ENCODE measurements at regions of chr3 and their contacts with region 1.

Region 1: DNA sequence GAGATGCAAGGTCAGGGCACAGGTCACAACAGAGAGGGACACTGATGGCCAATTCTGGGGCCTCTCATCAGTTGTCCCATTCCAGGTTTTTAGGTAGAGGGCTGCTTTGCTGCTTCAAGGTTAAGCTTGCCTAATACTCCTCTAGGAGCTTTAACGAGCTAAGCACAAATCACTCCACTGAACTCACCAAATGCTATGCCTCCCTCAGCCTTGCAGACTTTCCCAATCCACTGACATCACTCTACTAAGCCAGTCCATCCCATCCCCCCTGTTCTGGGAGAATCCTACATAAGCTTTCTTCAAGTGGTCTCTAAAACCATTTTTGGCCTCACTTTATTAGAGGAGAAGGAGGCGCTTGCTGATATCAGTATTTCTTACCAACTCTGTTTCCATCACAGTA is 24.8 kb upstream of the PDCD6IP start:
- DNase-seq: no peak
- ATAC-seq: 0 out of 6 replicates have a peak, but pooled peaks of 1 of the 2 experiments have one; percentile 43
- H3K4me3 ChIP-seq: no peak overlapping the region
- H3K27ac ChIP-seq: no peak overlapping the region
- H3K4me1 ChIP-seq: no peaks in the 10 kb centered on the region
- CTCF ChIP-seq: no peak
- EP300 ChIP-seq: no peak
- POLR2A ChIP-seq: no peak
- RAD21 ChIP-seq: no peak

Region 2: DNA sequence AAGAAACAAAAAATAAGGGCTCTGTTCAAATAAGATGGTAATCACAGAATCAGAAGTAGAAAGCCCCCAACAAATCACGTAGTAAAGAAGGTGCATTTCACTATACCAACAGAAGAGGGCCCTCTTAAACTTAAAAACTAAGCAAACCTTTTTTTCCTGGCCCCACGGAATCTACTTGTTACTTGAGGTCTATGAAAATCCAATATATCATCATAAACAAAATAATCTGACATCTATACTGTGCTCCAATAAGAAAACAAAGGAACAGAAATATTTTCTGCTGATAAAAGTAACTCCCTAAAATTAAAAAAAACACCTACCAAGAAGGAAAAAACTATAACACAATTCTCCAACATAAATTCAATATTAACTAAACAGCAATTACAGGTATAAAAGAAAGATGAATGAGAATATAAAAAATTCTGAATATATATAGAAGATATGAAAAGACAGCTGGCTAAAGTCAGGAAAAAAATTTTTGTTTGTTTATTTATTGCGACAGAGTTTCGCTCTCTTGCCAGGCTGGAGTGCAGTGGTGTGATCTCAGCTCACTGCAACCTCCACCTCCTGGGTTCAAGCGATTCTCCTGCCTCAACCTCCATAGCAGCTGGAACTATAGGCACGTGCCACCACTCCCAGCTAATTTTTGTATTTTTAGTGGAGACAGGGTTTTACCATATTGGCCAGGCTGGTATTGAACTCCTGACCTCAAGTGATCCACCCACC is 137.3 kb before region 1 on chr3:
- CTCF ChIA-PET with region 1: interaction called, 39 read pairs
- POLR2A ChIA-PET with region 1: no interaction called
- DNase-seq: peak; percentile 19 to 73
- ATAC-seq: peak; percentile 47 to 70; a peak in 3 of 6 replicates
- H3K4me3 ChIP-seq: no peak overlapping the region
- H3K27ac ChIP-seq: no peak overlapping the region
- H3K4me1 ChIP-seq: peaks cover 17% of the 10 kb centered on the region
- CTCF ChIP-seq: peak; percentile 80
- EP300 ChIP-seq: no peak
- POLR2A ChIP-seq: no peak
- RAD21 ChIP-seq: peak; percentile 78 to 80